Gastrocnemius medialis (tissue), 4 donors: ENCODE measurements at regions of chr6 and their contacts with region 1.

Region 1: GRCh38 chr6:75296811-75297779 is 12.5 kb upstream of the TMEM30A start:
- DNase-seq: no peak
- ATAC-seq: peak; percentile 43 to 47
- H3K4me3 ChIP-seq: no peak overlapping the region
- H3K27ac ChIP-seq: no peak overlapping the region
- H3K4me1 ChIP-seq: peaks cover 23 to 27% of the 10 kb centered on the region in 2 donors
- H3K27me3 ChIP-seq: no peaks in the 10 kb centered on the region
- CTCF ChIP-seq: peak; percentile 58 to 79 (median 67)
- POLR2A ChIP-seq: no peak

Region 2: DNA sequence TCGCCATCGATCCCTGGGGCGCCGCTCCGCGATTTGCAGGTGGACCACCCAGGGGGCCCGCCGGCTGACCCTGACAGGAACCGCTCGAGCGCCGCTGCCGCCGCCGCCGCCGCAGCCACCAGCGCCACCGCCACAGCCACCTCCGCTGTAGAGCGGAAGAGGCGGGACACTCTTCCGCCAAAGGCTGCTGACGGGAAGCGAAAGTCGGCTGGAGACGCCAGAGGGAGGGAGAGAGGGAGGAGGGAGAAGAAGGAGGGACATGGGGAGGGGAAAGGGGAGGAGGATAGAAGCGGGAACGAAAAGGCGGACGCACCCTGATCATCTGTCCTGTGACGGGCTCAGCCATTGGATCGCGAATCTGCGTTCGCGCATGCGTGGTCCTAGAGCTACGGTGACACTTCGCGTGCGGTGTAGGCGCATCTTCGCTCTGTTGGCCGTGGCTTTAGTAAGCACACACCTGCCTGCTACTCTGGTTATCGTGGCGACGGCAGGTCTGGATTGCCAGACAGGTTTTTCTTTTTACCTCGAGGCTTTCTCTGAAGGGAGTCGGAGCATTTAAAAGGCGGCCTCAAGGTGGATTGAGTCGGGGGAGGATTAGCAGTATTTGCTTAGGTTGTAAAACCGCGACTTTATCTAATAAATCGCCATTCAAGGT is 12.3 kb before region 1 on chr6 and contains the start of gene TMEM30A:
- in situ Hi-C with region 1: no loop called
- intact Hi-C with region 1: no loop called
- DNase-seq: peak; percentile 99
- ATAC-seq: peak; percentile 98 to 99
- H3K4me3 ChIP-seq: peak within 1 kb of the TSS; percentile 75 to 90 (median 76)
- H3K27ac ChIP-seq: peak within 1 kb of the TSS; percentile 80 to 94 (median 91)
- H3K4me1 ChIP-seq: peaks cover 40 to 42% of the 10 kb centered on the region in 2 donors
- H3K27me3 ChIP-seq: no peaks in the 10 kb centered on the region
- CTCF ChIP-seq: peak in 1 of 5 experiments; percentile 14
- POLR2A ChIP-seq: peak; percentile 83 to 87
- total RNA-seq, gene TMEM30A: 23.8 to 44.4 (median 31.9) TPM

Region 3: DNA sequence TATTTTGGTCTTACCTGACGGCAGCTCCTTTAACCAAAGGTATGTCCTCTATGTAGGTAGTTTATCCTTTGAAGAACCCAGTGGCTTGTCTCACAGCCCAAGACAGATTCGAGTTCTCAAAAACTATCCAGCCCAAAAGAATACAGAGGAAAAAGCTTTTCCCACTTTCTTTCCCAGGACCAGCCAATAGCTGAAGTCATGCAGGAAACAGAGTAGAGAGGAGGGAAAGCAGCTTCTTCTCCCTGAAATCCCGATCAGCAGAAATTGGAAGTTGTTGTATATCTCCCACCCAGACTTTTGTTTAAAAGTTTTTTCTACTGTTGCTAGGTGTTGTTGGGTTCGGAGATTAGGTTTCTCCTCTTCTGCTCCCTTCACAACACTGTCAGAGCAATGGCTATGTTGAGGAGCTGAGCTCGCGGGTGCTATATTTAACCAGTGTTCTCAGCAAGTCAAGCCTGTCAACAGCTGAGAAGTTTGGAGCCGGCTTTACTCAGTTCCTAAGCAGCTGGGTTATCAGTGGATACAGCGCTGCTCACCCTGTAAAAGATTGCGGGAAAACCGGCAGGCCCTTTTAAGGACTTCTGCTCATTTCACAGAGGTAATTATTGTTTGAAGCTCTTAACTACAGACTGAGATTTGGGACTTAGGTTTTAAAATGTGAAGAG is 196.4 kb after region 1 on chr6 and contains the start of gene FILIP1:
- in situ Hi-C with region 1: no loop called
- intact Hi-C with region 1: no loop called
- DNase-seq: peak; percentile 91 to 92
- ATAC-seq: peak; percentile 91 to 92
- H3K4me3 ChIP-seq: peak within 1 kb of the TSS; percentile 68 to 82 (median 76)
- H3K27ac ChIP-seq: peak within 1 kb of the TSS; percentile 93 to 98 (median 98)
- H3K4me1 ChIP-seq: peaks cover 50 to 55% of the 10 kb centered on the region in 2 donors
- H3K27me3 ChIP-seq: no peaks in the 10 kb centered on the region
- CTCF ChIP-seq: no peak
- POLR2A ChIP-seq: peak; percentile 88 to 98
- total RNA-seq, gene FILIP1: 57.5 to 123 (median 93.8) TPM

Region 4: GRCh38 chr6:75504465-75505228 is 207.6 kb after region 1 on chr6:
- in situ Hi-C with region 1: loop called in 3 of 4 experiments (anchors 10 kb)
- intact Hi-C with region 1: loop called (anchors 1 kb)
- DNase-seq: peak; percentile 24 to 45
- ATAC-seq: peak; percentile 93 to 99
- H3K4me3 ChIP-seq: no peak overlapping the region
- H3K27ac ChIP-seq: no peak overlapping the region
- H3K4me1 ChIP-seq: peaks cover 0 to under 1% of the 10 kb centered on the region in 2 donors
- H3K27me3 ChIP-seq: no peaks in the 10 kb centered on the region
- CTCF ChIP-seq: peak; percentile 55 to 87 (median 69)
- POLR2A ChIP-seq: no peak

Region 5: GRCh38 chr6:75526502-75527127 is 229.5 kb after region 1 on chr6:
- in situ Hi-C with region 1: no loop called
- intact Hi-C with region 1: loop called (anchors 2 kb)
- DNase-seq: peak; percentile 8 to 30
- ATAC-seq: peak; percentile 89 to 94
- H3K4me3 ChIP-seq: no peak overlapping the region
- H3K27ac ChIP-seq: no peak overlapping the region
- H3K4me1 ChIP-seq: no peaks in the 10 kb centered on the region
- H3K27me3 ChIP-seq: no peaks in the 10 kb centered on the region
- CTCF ChIP-seq: peak; percentile 72 to 84 (median 74)
- POLR2A ChIP-seq: no peak